GM12878 (cell line): ENCODE measurements at regions of chr2 and their contacts with region 1.

Region 1: DNA sequence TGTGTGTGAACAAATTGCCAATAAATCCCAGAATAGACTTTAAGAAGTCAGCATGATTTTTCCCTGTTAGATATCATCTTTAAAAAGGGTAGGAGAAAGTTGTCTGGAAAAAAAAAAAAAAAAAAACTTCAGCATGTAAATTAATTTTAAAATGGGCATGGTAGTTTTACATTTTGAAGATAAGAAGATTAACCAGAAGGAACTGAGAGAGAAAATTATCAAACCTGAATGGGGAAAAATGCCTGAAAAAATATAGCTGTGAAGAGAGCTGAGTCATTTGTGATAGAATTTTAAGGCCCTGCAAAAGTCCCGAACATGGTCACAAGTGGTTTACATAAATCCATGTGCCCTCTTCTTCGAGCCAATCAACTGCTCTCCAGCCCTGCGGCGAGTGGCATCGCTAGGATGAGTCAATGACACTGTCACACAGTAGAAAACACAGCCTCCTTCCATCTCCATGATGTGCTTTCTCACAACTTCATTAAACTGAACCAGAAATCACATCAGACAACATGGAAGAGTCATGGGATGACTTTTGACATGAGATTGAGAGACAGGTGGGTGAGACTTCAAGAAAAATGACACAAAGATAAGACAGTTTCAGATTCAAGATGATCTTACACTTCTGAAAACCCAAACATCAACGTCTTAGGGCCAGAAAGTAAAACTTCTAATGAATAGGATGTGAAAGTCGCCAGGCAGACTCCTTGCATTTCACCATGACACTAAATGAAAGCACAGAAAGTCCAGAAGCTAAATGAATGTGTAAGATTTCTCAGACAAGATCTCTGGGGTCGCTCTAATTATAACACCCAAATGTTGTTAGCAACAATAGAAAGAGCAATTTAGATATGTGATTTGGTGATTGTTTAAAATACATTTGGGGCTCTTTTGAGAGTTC is 273.0 kb upstream of the ID2 start:
- DNase-seq: peak; percentile 99
- ATAC-seq: peak; percentile 90
- H3K4me3 ChIP-seq: no peak overlapping the region
- H3K27ac ChIP-seq: peak overlapping the region; percentile 80
- H3K4me1 ChIP-seq: peaks cover 32% of the 10 kb centered on the region
- H3K27me3 ChIP-seq: no peaks in the 10 kb centered on the region
- CTCF ChIP-seq: no peak
- EP300 ChIP-seq: peak; percentile 95 to 96
- POLR2A ChIP-seq: no peak
- RAD21 ChIP-seq: peak; percentile 29; the same call in 1 of the 2 replicates

Region 2: GRCh38 chr2:7825591-7826312 is 583.1 kb before region 1 on chr2:
- CTCF ChIA-PET with region 1: no interaction called
- POLR2A ChIA-PET with region 1: no interaction called
- RAD21 ChIA-PET with region 1: interaction called, 4 read pairs
- SMC1A ChIA-PET with region 1: no interaction called
- in situ Hi-C with region 1: no loop called
- intact Hi-C with region 1: loop called (anchors 5 kb)
- DNase-seq: peak; percentile 78
- ATAC-seq: peak; percentile 97
- H3K4me3 ChIP-seq: no peak overlapping the region
- H3K27ac ChIP-seq: peak overlapping the region; percentile 75
- H3K4me1 ChIP-seq: peaks cover 10% of the 10 kb centered on the region
- H3K27me3 ChIP-seq: no peaks in the 10 kb centered on the region
- CTCF ChIP-seq: no peak
- EP300 ChIP-seq: peak; percentile 94 to 98
- POLR2A ChIP-seq: no peak
- RAD21 ChIP-seq: peak; percentile 19; the same call in 1 of the 2 replicates

Region 3: GRCh38 chr2:8312861-8313830 is 95.7 kb before region 1 on chr2:
- CTCF ChIA-PET with region 1: interaction called, 18 read pairs
- POLR2A ChIA-PET with region 1: interaction called, 36 read pairs
- RAD21 ChIA-PET with region 1: interaction called, 138 read pairs
- SMC1A ChIA-PET with region 1: interaction called, 352 read pairs
- in situ Hi-C with region 1: no loop called
- intact Hi-C with region 1: loop called (anchors 1 kb)
- DNase-seq: peak; percentile 96
- ATAC-seq: peak; percentile 81
- H3K4me3 ChIP-seq: no peak overlapping the region; the same call in 1 of the 2 replicates
- H3K27ac ChIP-seq: peak overlapping the region; percentile 72
- H3K4me1 ChIP-seq: peaks cover 53% of the 10 kb centered on the region
- H3K27me3 ChIP-seq: no peaks in the 10 kb centered on the region
- CTCF ChIP-seq: no peak
- EP300 ChIP-seq: peak; percentile 46 to 86; a peak in 3 of 4 replicates
- POLR2A ChIP-seq: no peak
- RAD21 ChIP-seq: peak; percentile 29

Region 4: GRCh38 chr2:8389373-8390108 is 19.3 kb before region 1 on chr2:
- CTCF ChIA-PET with region 1: interaction called, 19 read pairs
- POLR2A ChIA-PET with region 1: interaction called, 12 read pairs
- RAD21 ChIA-PET with region 1: interaction called, 3 read pairs
- SMC1A ChIA-PET with region 1: interaction called, 31 read pairs
- in situ Hi-C with region 1: no loop called
- intact Hi-C with region 1: no loop called
- DNase-seq: no peak
- ATAC-seq: 0 out of 3 replicates have a peak, but pooled peaks have one; percentile 20
- H3K4me3 ChIP-seq: no peak overlapping the region
- H3K27ac ChIP-seq: no peak overlapping the region
- H3K4me1 ChIP-seq: peaks cover 3% of the 10 kb centered on the region; the same call in 1 of the 2 replicates
- H3K27me3 ChIP-seq: no peaks in the 10 kb centered on the region
- CTCF ChIP-seq: no peak
- EP300 ChIP-seq: no peak
- POLR2A ChIP-seq: no peak
- RAD21 ChIP-seq: no peak

Region 5: GRCh38 chr2:8514796-8515758 is 106.3 kb after region 1 on chr2:
- CTCF ChIA-PET with region 1: interaction called, 5 read pairs
- POLR2A ChIA-PET with region 1: interaction called, 3 read pairs
- RAD21 ChIA-PET with region 1: interaction called, 21 read pairs
- SMC1A ChIA-PET with region 1: interaction called, 20 read pairs
- in situ Hi-C with region 1: no loop called
- intact Hi-C with region 1: loop called (anchors 1 kb)
- DNase-seq: peak; percentile 99
- ATAC-seq: peak; percentile 82
- H3K4me3 ChIP-seq: peak overlapping the region; percentile 51; the same call in 1 of the 2 replicates
- H3K27ac ChIP-seq: peak overlapping the region; percentile 93
- H3K4me1 ChIP-seq: peaks cover 46% of the 10 kb centered on the region
- H3K27me3 ChIP-seq: no peaks in the 10 kb centered on the region
- CTCF ChIP-seq: no peak
- EP300 ChIP-seq: peak; percentile 76 to 95; a peak in 3 of 4 replicates
- POLR2A ChIP-seq: no peak
- RAD21 ChIP-seq: peak; percentile 36; the same call in 1 of the 2 replicates

Region 6: DNA sequence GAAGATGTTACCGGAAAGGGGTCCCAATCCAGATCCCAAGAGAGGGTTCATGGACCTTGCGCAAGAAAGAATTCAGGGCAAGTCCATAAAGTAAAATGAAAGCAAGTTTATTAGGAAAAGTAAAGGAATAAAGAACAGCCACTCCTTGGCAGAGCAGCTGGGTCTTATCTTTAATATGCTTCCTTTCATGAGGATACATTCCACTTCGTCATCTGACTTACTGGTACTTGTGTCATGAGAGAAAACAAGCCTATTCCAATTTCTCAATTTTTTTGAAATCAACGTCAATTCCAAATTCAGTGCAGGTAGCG is 212.2 kb after region 1 on chr2:
- CTCF ChIA-PET with region 1: no interaction called
- POLR2A ChIA-PET with region 1: interaction called, 11 read pairs
- RAD21 ChIA-PET with region 1: no interaction called
- SMC1A ChIA-PET with region 1: no interaction called
- in situ Hi-C with region 1: no loop called
- intact Hi-C with region 1: no loop called
- DNase-seq: no peak
- ATAC-seq: no peak
- H3K4me3 ChIP-seq: no peak overlapping the region
- H3K27ac ChIP-seq: no peak overlapping the region
- H3K4me1 ChIP-seq: no peaks in the 10 kb centered on the region
- H3K27me3 ChIP-seq: peaks cover 0 to 8% of the 10 kb centered on the region in 2 experiments; a peak in 2 of 4 replicates
- CTCF ChIP-seq: no peak
- EP300 ChIP-seq: no peak
- POLR2A ChIP-seq: no peak
- RAD21 ChIP-seq: no peak